ENCODE measurements at regions of chr10 and their contacts with region 1.

Region 1: GRCh38 chr10:103918053-103918846 is at the start of gene STN1:
- DNase-seq: peak; percentile 99
- ATAC-seq: peak; percentile 98
- total RNA-seq, gene STN1: 30.1 TPM

Region 2: GRCh38 chr10:103265717-103266329 is 652.4 kb before region 1 on chr10:
- intact Hi-C with region 1: no loop called
- DNase-seq: no peak
- ATAC-seq: no peak

Region 3: DNA sequence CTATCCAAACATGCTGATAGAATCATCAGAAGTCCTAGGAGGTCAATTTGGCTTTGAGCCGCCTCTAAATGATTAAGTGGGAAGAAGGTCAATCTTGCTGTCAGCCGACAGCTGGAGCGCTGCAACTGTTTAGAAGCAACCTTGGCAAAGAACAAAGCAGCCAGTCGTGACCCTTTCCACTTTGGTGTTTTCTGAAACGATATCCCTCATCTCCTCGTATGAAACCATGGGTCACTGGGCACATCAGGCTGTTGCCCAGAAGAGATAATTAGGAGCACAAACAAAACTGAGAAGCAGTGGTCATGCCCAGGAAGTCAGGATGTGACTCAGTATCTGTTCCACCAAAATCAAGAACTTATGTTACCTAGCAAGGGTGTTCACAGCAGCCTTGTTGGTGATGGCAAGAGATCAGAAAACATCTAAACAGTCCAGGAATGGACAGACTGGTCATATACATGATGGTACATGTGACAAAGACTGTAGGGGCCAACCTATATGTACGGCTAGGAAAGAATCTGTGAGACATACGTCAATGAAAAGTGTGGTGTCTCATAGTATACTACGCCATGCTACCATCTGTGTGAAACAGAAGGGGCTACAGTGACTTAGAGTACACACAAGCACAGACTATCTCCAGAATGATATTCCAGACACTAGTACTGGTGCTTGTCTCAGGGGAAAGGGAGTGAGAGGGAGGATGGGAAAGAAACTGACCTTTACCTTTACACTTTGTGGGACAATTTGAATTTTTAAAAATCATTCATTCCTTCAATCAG is 22.7 kb before region 1 on chr10:
- intact Hi-C with region 1: loop called (anchors 2 kb)
- DNase-seq: no peak
- ATAC-seq: peak; percentile 24

Region 4: GRCh38 chr10:103966671-103967447 is 48.6 kb after region 1 on chr10 and contains the start of gene SLK:
- intact Hi-C with region 1: loop called (anchors 2 kb)
- DNase-seq: peak; percentile 93
- ATAC-seq: peak; percentile 98
- total RNA-seq, gene SLK: 28.9 TPM

Measured in Right ventricle myocardium inferior (tissue), 1 donor.